ENCODE measurements at regions of chrX and their contacts with region 1.

Region 1: DNA sequence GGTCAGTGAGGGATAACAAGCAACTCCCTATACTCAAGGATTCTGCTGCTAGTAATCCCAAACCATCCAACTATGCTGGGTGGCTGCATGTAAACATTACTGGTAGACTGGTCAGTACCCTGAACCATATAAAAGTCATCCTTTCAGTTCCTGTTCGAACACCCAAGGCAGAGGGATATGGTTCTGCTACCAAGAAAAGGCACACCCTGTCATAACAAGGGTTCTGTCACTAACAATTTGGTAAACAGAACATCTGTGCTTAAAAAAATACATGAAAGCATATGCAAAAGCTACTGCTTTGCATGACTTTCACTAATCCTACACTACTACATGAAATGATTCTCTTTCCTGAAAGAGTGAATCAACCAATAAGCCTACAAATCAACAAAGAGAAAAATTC is 76.8 kb upstream of the MCF2 start:
- DNase-seq: no peak
- H3K4me3 ChIP-seq: no peak overlapping the region
- H3K27ac ChIP-seq: no peak overlapping the region
- H3K4me1 ChIP-seq: no peaks in the 10 kb centered on the region
- H3K27me3 ChIP-seq: no peaks in the 10 kb centered on the region
- CTCF ChIP-seq: no peak
- POLR2A ChIP-seq: no peak

Region 2: GRCh38 chrX:139287155-139287924 is 497.5 kb before region 1 on chrX:
- intact Hi-C with region 1: loop called (anchors 5 kb)
- DNase-seq: no peak
- H3K4me3 ChIP-seq: no peak overlapping the region
- H3K27ac ChIP-seq: no peak overlapping the region
- H3K4me1 ChIP-seq: no peaks in the 10 kb centered on the region
- H3K27me3 ChIP-seq: no peaks in the 10 kb centered on the region
- CTCF ChIP-seq: no peak
- POLR2A ChIP-seq: no peak